ENCODE measurements at regions of chr5 and their contacts with region 1.

Region 1: GRCh38 chr5:149035372-149035790 is 27.5 kb downstream of the SH3TC2 start:
- DNase-seq: peak; percentile 87
- H3K4me3 Mint-ChIP-seq: no peak overlapping the region
- H3K27ac Mint-ChIP-seq: no peak overlapping the region
- H3K4me1 Mint-ChIP-seq: peaks cover 17% of the 10 kb centered on the region
- H3K27me3 Mint-ChIP-seq: no peaks in the 10 kb centered on the region
- CTCF ChIP-seq: peak; percentile 96

Region 2: GRCh38 chr5:147822686-147823491 is 1212.5 kb before region 1 on chr5:
- CTCF ChIA-PET with region 1: no interaction called
- POLR2A ChIA-PET with region 1: no interaction called
- intact Hi-C with region 1: no loop called
- DNase-seq: peak; percentile 77
- H3K4me3 Mint-ChIP-seq: no peak overlapping the region
- H3K27ac Mint-ChIP-seq: no peak overlapping the region
- H3K4me1 Mint-ChIP-seq: peaks cover 4% of the 10 kb centered on the region
- H3K27me3 Mint-ChIP-seq: peaks cover 33% of the 10 kb centered on the region
- CTCF ChIP-seq: peak; percentile 96

Region 3: DNA sequence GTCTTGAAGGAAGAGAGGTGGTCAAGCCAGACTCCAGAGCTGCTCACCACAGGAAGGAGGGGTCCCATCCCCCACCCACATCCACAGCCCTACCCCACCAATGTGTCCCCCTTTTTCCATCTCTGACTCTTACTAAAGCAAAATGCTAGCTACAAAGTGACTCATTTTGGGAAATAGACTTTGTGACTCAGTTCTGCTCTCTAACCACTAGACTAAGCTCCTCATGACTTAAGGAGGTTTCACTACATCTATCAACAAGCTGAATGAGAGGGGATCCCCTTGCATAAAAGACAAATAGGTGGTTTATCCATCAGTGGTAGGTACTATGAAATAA is 244.1 kb before region 1 on chr5:
- CTCF ChIA-PET with region 1: interaction called, 13 read pairs
- POLR2A ChIA-PET with region 1: no interaction called
- intact Hi-C with region 1: no loop called
- DNase-seq: peak; percentile 66
- H3K4me3 Mint-ChIP-seq: no peak overlapping the region
- H3K27ac Mint-ChIP-seq: peak overlapping the region; percentile 88
- H3K4me1 Mint-ChIP-seq: peaks cover 60% of the 10 kb centered on the region
- H3K27me3 Mint-ChIP-seq: no peaks in the 10 kb centered on the region
- CTCF ChIP-seq: no peak

Region 4: DNA sequence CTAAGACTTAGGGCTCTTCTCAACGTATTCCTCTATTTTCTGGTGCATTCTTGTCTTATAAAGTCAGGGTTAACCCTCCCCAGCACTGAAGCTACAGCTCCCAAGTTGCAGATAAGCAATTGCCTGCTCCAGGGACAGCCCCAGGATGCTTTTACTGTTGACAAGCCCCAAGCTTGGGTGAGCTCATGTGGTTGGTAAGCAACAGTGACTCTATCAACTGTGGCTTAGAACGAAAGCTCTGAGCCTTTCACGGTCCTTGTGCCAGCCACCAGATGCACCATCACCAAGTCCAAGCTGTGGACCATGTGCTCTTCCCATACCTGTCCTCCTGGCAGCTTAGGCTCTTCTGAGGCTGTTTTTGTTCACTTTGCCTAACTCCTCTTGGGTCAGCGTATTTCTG is 195.4 kb before region 1 on chr5:
- CTCF ChIA-PET with region 1: interaction called, 16 read pairs
- POLR2A ChIA-PET with region 1: interaction called, 4 read pairs
- intact Hi-C with region 1: no loop called
- DNase-seq: no peak
- H3K4me3 Mint-ChIP-seq: no peak overlapping the region
- H3K27ac Mint-ChIP-seq: peak overlapping the region; percentile 29
- H3K4me1 Mint-ChIP-seq: peaks cover 44% of the 10 kb centered on the region
- H3K27me3 Mint-ChIP-seq: no peaks in the 10 kb centered on the region
- CTCF ChIP-seq: no peak

Region 5: DNA sequence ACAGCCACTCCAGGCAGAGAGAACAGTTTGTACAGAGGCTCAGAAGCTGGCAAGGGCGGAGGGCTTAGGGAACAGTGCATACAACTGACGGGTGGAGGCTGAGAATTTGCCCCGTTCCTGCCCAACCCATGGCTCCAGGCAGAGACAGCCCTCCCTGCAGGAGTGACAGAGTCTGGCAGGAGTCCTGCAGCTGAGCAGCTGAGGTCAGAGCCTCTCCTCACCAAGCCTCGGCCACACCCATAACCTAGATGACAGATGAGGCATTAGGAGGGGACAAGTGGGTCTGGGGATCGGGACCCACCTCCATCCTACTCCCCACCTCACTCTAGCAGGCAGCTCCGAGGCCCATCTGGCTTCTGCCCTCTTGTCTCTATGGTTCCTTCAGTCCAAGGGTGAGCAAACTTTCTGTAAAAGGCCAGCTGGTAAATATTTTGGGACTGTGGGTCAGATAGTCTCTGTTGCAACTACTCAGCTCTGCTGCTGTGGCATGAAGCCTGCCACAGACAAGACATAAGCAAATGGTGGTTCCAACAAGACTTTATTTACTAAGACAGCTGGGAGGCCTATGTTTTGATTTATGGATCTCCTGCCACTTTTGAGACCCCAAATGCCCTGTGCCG is 56.2 kb before region 1 on chr5:
- CTCF ChIA-PET with region 1: interaction called, 14 read pairs
- POLR2A ChIA-PET with region 1: interaction called, 6 read pairs
- intact Hi-C with region 1: no loop called
- DNase-seq: peak; percentile 95
- H3K4me3 Mint-ChIP-seq: peak overlapping the region; percentile 59
- H3K27ac Mint-ChIP-seq: peak overlapping the region; percentile 97
- H3K4me1 Mint-ChIP-seq: peaks cover 70% of the 10 kb centered on the region
- H3K27me3 Mint-ChIP-seq: no peaks in the 10 kb centered on the region
- CTCF ChIP-seq: no peak

Region 6: DNA sequence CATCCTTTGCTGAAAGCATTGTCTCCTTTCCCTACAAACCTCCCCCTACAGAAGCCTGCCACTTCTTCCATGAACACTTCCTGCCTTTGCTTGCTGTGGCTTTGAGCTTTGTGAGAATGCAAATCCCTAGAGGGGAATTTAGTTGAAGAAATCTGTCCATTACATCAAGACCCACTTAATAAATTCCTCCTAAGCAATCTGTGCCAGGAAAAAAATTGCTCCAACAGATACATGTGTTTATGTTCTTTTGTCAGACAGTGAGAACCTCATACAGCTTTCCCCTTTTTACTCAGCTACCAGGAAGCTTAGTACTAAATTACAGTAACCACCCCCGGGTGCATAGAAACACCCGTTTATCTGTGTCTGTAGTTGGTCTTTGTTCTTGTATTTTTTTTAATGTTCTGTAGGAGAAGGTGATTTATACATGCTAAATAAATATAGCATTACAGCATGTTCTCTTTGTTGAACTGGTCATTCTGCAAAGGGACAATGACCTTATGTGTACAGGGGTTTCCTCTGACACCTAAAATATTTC is 16.4 kb before region 1 on chr5:
- CTCF ChIA-PET with region 1: interaction called, 300 read pairs
- POLR2A ChIA-PET with region 1: interaction called, 4 read pairs
- intact Hi-C with region 1: no loop called
- DNase-seq: no peak
- H3K4me3 Mint-ChIP-seq: no peak overlapping the region
- H3K27ac Mint-ChIP-seq: no peak overlapping the region
- H3K4me1 Mint-ChIP-seq: peaks cover 12% of the 10 kb centered on the region
- H3K27me3 Mint-ChIP-seq: no peaks in the 10 kb centered on the region
- CTCF ChIP-seq: no peak

Region 7: GRCh38 chr5:149094981-149095380 is 59.6 kb after region 1 on chr5:
- CTCF ChIA-PET with region 1: interaction called, 10 read pairs
- POLR2A ChIA-PET with region 1: no interaction called
- intact Hi-C with region 1: no loop called
- DNase-seq: no peak
- H3K4me3 Mint-ChIP-seq: no peak overlapping the region
- H3K27ac Mint-ChIP-seq: no peak overlapping the region
- H3K4me1 Mint-ChIP-seq: no peaks in the 10 kb centered on the region
- H3K27me3 Mint-ChIP-seq: no peaks in the 10 kb centered on the region
- CTCF ChIP-seq: no peak

Region 8: GRCh38 chr5:149268928-149269557 is 233.7 kb after region 1 on chr5:
- CTCF ChIA-PET with region 1: interaction called, 24 read pairs
- POLR2A ChIA-PET with region 1: no interaction called
- intact Hi-C with region 1: loop called (anchors 1 kb)
- DNase-seq: peak; percentile 84
- H3K4me3 Mint-ChIP-seq: no peak overlapping the region
- H3K27ac Mint-ChIP-seq: no peak overlapping the region
- H3K4me1 Mint-ChIP-seq: peaks cover 14% of the 10 kb centered on the region
- H3K27me3 Mint-ChIP-seq: no peaks in the 10 kb centered on the region
- CTCF ChIP-seq: peak; percentile 91

Region 9: DNA sequence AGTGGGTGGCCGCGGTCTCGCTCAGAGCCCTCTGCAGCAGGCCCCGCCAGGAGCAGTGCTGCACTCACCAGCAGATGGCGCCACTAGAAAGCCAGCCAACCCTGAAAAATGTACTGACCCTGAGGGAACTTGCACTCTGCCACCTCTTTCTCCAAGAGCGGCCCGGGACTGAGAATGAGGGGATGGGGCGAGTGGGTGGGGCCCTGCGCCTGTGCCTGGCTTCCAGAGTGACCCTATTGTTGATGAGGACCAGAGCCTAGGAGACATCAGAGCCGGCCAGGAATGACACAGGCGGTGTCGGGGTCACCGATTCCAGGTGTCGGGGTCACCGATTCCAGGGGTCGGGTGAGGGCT is 346.6 kb after region 1 on chr5:
- CTCF ChIA-PET with region 1: no interaction called
- POLR2A ChIA-PET with region 1: no interaction called
- intact Hi-C with region 1: no loop called
- DNase-seq: peak; percentile 78
- H3K4me3 Mint-ChIP-seq: no peak overlapping the region
- H3K27ac Mint-ChIP-seq: no peak overlapping the region
- H3K4me1 Mint-ChIP-seq: no peaks in the 10 kb centered on the region
- H3K27me3 Mint-ChIP-seq: no peaks in the 10 kb centered on the region
- CTCF ChIP-seq: peak; percentile 97